GM12878 (cell line): ENCODE measurements at regions of chr13 and their contacts with region 1.

Region 1: GRCh38 chr13:45367358-45367757 is 26.4 kb upstream of the TPT1 start:
- DNase-seq: peak; percentile 67
- ATAC-seq: peak; percentile 99
- H3K4me3 ChIP-seq: 0 out of 2 replicates have a peak overlapping the region, but pooled peaks have one; percentile 11
- H3K27ac ChIP-seq: peak overlapping the region; percentile 24
- H3K4me1 ChIP-seq: peaks cover 12% of the 10 kb centered on the region
- H3K27me3 ChIP-seq: no peaks in the 10 kb centered on the region
- CTCF ChIP-seq: no peak
- EP300 ChIP-seq: peak in 1 of 2 experiments; percentile 68; a peak in 1 of 4 replicates
- POLR2A ChIP-seq: 0 out of 2 replicates have a peak, but pooled peaks have one; percentile 27
- RAD21 ChIP-seq: no peak

Region 2: GRCh38 chr13:45242070-45242469 is 125.3 kb before region 1 on chr13:
- CTCF ChIA-PET with region 1: no interaction called
- POLR2A ChIA-PET with region 1: no interaction called
- RAD21 ChIA-PET with region 1: no interaction called
- SMC1A ChIA-PET with region 1: no interaction called
- in situ Hi-C with region 1: no loop called
- intact Hi-C with region 1: no loop called
- DNase-seq: no peak
- ATAC-seq: no peak
- H3K4me3 ChIP-seq: no peak overlapping the region
- H3K27ac ChIP-seq: no peak overlapping the region
- H3K4me1 ChIP-seq: no peaks in the 10 kb centered on the region
- H3K27me3 ChIP-seq: no peaks in the 10 kb centered on the region
- CTCF ChIP-seq: no peak
- EP300 ChIP-seq: no peak
- POLR2A ChIP-seq: no peak
- RAD21 ChIP-seq: no peak

Region 3: DNA sequence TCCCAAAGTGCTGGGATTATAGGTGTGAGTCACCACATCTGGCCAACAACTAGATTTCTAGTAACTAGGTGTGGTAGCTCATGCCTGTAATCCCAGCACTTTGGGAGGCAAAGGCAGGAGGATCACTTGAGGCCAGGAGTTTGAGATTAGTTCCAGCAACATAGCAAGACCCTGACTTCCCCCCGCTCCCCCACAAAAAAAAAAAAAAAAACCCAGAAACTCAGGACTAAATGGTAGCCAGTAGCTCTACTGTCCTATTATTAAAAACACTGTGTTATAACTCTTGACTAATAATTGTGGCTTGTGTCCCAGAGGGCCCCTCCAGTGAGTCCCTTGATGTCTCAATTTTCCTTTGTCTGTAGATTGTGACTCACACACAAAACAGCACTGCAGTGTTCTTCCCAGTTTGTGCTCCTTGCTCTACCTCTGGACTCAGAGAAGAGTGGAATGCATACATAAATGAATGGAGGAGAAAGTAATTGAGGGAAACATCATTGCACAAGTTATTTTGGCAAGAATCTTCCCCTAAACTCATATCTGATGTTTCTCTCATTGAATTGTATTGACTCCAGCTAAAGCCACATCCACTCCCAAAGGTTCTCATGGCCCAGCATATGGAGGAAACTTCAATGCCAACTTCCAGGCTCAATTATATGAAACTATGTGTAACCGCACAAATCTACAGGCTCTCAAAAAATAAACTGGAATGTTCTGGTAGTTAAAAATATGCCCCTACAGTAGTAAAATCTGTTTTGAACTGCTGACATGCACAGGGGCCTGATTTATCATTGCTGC is 35.1 kb before region 1 on chr13:
- CTCF ChIA-PET with region 1: interaction called, 13 read pairs
- POLR2A ChIA-PET with region 1: interaction called, 3 read pairs
- RAD21 ChIA-PET with region 1: no interaction called
- SMC1A ChIA-PET with region 1: interaction called, 7 read pairs
- in situ Hi-C with region 1: no loop called
- intact Hi-C with region 1: no loop called
- DNase-seq: no peak
- ATAC-seq: no peak
- H3K4me3 ChIP-seq: no peak overlapping the region
- H3K27ac ChIP-seq: no peak overlapping the region
- H3K4me1 ChIP-seq: peaks cover 22% of the 10 kb centered on the region
- H3K27me3 ChIP-seq: no peaks in the 10 kb centered on the region
- CTCF ChIP-seq: no peak
- EP300 ChIP-seq: no peak
- POLR2A ChIP-seq: no peak
- RAD21 ChIP-seq: no peak

Region 4: DNA sequence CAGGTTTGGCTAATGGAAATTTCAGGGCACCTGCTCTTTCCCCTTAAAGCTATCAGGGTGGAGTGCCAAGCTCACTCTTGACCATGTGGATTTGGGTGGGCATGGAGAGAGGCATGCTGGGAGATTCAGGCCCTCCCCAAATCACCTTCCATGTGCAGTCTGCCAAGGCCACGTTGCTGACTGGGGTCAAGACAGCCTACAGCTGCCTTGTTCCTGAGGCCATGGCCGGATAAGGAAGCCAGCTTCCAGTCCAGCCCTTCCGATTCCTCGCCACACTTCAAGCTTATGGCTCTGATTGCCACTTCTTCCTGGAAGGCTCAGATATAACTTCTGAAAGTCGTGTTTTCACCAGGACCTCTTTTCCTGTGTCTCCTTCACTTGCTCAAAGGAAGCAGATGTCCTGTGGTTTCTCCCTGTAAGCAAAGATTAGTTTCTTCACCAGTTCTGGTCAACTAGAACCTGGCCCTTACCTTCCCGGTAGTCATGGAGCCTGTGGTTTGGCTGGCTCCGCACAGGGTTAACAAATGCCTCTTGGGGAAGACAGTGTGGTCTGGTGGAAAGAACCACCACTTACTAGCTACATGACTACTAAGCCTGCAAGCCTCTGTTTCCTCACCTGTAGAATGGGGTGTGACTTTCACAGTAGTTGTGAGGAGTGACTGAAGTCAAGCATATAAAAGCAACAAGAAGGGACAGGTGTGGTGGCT is 10.2 kb before region 1 on chr13:
- CTCF ChIA-PET with region 1: interaction called, 11 read pairs
- POLR2A ChIA-PET with region 1: interaction called, 3 read pairs
- RAD21 ChIA-PET with region 1: no interaction called
- SMC1A ChIA-PET with region 1: interaction called, 3 read pairs
- in situ Hi-C with region 1: no loop called
- intact Hi-C with region 1: no loop called
- DNase-seq: no peak
- ATAC-seq: peak; percentile 27
- H3K4me3 ChIP-seq: no peak overlapping the region
- H3K27ac ChIP-seq: no peak overlapping the region
- H3K4me1 ChIP-seq: peaks cover 13% of the 10 kb centered on the region
- H3K27me3 ChIP-seq: no peaks in the 10 kb centered on the region
- CTCF ChIP-seq: no peak
- EP300 ChIP-seq: no peak
- POLR2A ChIP-seq: no peak
- RAD21 ChIP-seq: no peak

Region 5: DNA sequence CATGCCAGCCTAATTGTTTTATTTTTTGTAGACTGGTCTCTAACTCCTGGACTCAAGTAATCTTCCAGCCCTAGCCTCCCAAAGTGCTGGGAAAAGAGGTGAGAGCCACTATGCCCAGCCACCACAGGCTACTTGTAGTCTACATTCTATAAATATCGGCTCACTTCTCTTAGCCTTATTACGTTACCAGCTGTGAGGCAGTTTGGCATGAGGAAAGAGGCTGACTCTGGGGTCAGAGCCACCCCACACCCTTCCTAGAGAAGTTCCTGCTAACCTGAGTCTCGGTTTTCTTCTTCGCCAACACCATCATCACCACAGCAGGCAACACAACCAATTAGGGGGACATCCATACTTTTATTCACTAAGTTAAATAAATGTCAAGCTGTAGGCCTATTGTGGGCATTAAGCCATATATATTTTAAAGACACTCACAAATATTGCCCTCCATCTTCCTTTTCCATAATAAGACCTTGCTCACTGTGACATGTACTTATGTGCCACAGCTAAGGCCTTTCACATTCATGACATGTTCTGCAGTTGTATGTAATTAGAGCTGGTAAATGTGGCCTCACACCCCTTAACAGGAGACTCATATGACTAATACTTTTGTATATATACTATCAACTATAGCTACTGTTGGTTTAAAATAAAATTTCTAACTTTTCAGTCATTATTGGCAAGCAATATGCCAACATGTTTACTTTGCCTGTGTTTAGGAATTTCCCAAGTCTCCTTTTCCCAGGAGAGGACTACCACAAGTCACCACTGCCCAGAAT is 45.1 kb after region 1 on chr13:
- CTCF ChIA-PET with region 1: interaction called, 19 read pairs
- POLR2A ChIA-PET with region 1: interaction called, 4 read pairs
- RAD21 ChIA-PET with region 1: no interaction called
- SMC1A ChIA-PET with region 1: interaction called, 3 read pairs
- in situ Hi-C with region 1: no loop called
- intact Hi-C with region 1: no loop called
- DNase-seq: no peak
- ATAC-seq: peak; percentile 23; the same call in 2 of the 3 replicates
- H3K4me3 ChIP-seq: no peak overlapping the region
- H3K27ac ChIP-seq: no peak overlapping the region
- H3K4me1 ChIP-seq: no peaks in the 10 kb centered on the region
- H3K27me3 ChIP-seq: no peaks in the 10 kb centered on the region
- CTCF ChIP-seq: no peak
- EP300 ChIP-seq: no peak
- POLR2A ChIP-seq: no peak
- RAD21 ChIP-seq: no peak

Region 6: DNA sequence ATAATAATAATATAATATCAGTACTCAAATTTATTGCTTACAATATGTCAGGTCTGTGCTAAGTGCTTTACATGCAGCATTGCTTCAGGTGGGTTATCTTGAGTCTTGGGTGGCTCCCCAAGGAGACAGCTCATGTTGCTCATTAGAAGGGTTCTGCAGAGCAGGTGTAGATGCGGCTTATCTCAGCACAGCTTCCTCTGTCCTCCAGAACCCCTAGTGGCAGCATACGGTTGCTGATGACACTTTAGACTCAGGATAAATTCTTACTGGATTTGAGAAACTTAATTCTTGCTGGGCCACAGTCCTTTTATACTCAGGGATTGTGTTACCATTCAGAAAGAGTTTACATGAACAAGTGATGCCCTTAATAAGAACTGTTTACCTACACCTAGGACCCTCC is 106.3 kb after region 1 on chr13:
- CTCF ChIA-PET with region 1: interaction called, 8 read pairs
- POLR2A ChIA-PET with region 1: no interaction called
- RAD21 ChIA-PET with region 1: interaction called, 4 read pairs
- SMC1A ChIA-PET with region 1: interaction called, 3 read pairs
- in situ Hi-C with region 1: no loop called
- intact Hi-C with region 1: loop called (anchors 5 kb)
- DNase-seq: no peak
- ATAC-seq: peak; percentile 81
- H3K4me3 ChIP-seq: no peak overlapping the region
- H3K27ac ChIP-seq: 0 out of 2 replicates have a peak overlapping the region, but pooled peaks have one; percentile 20
- H3K4me1 ChIP-seq: peaks cover 26% of the 10 kb centered on the region
- H3K27me3 ChIP-seq: no peaks in the 10 kb centered on the region
- CTCF ChIP-seq: peak in 2 of 3 experiments; percentile 37 to 39; a peak in 4 of 6 replicates
- EP300 ChIP-seq: no peak
- POLR2A ChIP-seq: no peak
- RAD21 ChIP-seq: peak; percentile 45; the same call in 1 of the 2 replicates